Endothelial cell of umbilical vein (primary cell): ENCODE measurements at regions of chrX and their contacts with region 1.

Region 1: GRCh38 chrX:155216179-155216939 is at the start of gene VBP1:
- DNase-seq: peak; percentile 95
- H3K4me3 ChIP-seq: peak within 1 kb of the TSS; percentile 79 to 97 (median 91)
- H3K27ac ChIP-seq: peak within 1 kb of the TSS; percentile 85
- H3K4me1 ChIP-seq: peaks cover 14% of the 10 kb centered on the region
- H3K27me3 ChIP-seq: no peaks in the 10 kb centered on the region
- CTCF ChIP-seq: peak; percentile 21 to 46
- POLR2A ChIP-seq: peak; percentile 51
- total RNA-seq, gene VBP1: 45.8 and 51.5 TPM in 2 replicates

Region 2: DNA sequence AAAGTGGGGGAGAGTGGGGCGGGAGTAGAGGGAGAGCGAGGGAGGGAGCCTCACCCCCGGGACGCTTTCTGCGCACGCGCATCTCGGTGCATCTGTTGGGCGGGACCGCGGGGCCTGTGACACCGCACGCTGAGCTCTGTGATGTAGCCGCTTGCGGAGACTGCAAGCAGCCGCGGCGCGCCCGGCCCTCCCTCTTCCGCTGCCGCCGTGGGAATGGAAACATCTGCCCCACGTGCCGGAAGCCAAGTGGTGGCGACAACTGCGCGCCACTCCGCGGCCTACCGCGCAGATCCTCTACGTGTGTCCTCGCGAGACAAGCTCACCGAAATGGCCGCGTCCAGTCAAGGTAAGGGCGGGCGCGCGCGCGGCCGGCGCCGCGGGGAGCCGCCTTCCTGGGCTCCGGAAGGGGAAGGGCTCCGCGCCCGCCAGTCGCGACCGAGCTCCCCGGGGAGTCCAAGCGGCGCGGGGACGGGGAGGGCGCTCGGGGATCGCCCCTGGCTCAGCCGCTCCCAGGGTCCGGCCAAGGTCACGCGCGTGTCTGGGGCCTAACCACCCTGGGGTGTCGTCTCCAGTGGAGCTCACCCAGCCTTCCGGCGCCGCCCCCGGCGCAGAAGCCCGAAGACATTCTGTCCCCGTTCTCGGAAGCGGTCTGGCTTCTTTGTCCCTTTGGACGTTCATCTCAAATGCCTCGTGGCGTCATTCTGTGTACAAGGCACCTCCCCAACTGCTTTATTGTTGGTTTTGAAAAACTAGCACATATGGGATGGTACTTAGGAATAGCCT is 189.4 kb before region 1 on chrX and contains the start of gene FUNDC2:
- CTCF ChIA-PET with region 1: interaction called, 8 read pairs
- POLR2A ChIA-PET with region 1: no interaction called
- dilution Hi-C with region 1: no loop called
- intact Hi-C with region 1: loop called (anchors 5 kb)
- DNase-seq: peak; percentile 94
- H3K4me3 ChIP-seq: peak within 1 kb of the TSS; percentile 61 to 96 (median 82)
- H3K27ac ChIP-seq: peak within 1 kb of the TSS; percentile 96
- H3K4me1 ChIP-seq: no peaks in the 10 kb centered on the region
- H3K27me3 ChIP-seq: peaks cover 2% of the 10 kb centered on the region in 2 experiments
- CTCF ChIP-seq: no peak
- POLR2A ChIP-seq: no peak
- total RNA-seq, gene FUNDC2: 53.3 TPM in 2 replicates

Region 3: GRCh38 chrX:155094468-155095061 is 121.8 kb before region 1 on chrX:
- CTCF ChIA-PET with region 1: interaction called, 3 read pairs
- POLR2A ChIA-PET with region 1: no interaction called
- dilution Hi-C with region 1: no loop called
- intact Hi-C with region 1: loop called (anchors 10 kb)
- DNase-seq: peak; percentile 27
- H3K4me3 ChIP-seq: no peak overlapping the region
- H3K27ac ChIP-seq: no peak overlapping the region
- H3K4me1 ChIP-seq: no peaks in the 10 kb centered on the region
- H3K27me3 ChIP-seq: no peaks in the 10 kb centered on the region
- CTCF ChIP-seq: peak; percentile 42 to 49
- POLR2A ChIP-seq: no peak

Region 4: DNA sequence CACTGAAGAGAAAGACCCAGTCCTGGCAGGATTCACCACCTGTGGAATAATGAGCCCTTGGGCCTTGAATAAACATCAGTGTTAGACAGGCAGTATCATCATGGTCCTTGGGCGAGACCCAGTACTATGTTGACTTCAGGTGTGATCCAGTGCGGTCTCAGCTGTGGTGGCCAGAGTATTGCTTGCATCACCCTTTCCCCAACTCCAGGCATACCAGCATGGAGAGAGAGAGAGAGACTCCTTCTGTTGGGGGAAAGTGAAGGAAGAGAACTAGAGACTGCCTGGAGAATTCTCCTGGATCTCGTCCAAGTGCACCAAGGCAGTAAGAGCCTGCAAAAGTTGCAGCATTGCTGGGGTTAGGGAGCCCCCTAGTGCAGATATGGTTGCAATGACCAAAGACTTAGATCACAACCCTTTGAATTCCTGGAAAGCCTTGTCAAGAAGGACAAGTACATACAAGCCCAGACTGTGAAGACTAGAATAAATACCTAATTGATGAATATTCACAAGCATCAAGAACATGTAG is 603.7 kb after region 1 on chrX:
- CTCF ChIA-PET with region 1: no interaction called
- POLR2A ChIA-PET with region 1: no interaction called
- dilution Hi-C with region 1: no loop called
- intact Hi-C with region 1: loop called (anchors 2 kb)
- DNase-seq: peak; percentile 77
- H3K4me3 ChIP-seq: no peak overlapping the region
- H3K27ac ChIP-seq: no peak overlapping the region
- H3K4me1 ChIP-seq: no peaks in the 10 kb centered on the region
- H3K27me3 ChIP-seq: no peaks in the 10 kb centered on the region
- CTCF ChIP-seq: peak; percentile 40 to 61
- POLR2A ChIP-seq: no peak